HEK293T (cell line): ENCODE measurements at regions of chr15 and their contacts with region 1.

Region 1: DNA sequence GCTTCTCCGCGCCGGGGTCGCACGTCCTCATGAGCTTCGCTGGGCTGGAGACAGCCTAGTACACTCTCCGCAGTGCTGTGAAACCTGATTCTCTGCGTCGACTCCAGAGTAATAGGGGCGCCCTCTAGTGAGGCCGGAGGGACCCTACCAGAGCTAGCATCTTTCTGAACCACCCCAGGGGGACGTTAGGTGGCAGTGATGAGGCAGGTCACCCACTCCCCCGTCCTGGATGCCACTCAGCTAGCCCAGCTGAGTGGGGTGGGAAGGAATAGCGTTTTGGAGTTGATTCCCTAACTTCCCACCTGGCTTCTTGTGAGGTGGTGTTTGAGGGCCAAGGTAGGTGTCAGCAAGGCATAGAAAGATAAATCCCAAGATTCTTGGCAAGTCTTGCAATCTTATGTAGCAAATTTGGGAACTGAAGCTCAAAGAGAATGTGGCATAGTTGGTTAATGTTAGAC is 4.0 kb downstream of the DUOXA2 start:
- DNase-seq: peak; percentile 87

Region 2: GRCh38 chr15:44873103-44873502 is 245.1 kb before region 1 on chr15:
- CTCF ChIA-PET with region 1: no interaction called
- POLR2A ChIA-PET with region 1: no interaction called
- DNase-seq: no peak

Region 3: GRCh38 chr15:44968475-44968874 is 149.7 kb before region 1 on chr15:
- CTCF ChIA-PET with region 1: no interaction called
- POLR2A ChIA-PET with region 1: no interaction called
- DNase-seq: no peak

Region 4: DNA sequence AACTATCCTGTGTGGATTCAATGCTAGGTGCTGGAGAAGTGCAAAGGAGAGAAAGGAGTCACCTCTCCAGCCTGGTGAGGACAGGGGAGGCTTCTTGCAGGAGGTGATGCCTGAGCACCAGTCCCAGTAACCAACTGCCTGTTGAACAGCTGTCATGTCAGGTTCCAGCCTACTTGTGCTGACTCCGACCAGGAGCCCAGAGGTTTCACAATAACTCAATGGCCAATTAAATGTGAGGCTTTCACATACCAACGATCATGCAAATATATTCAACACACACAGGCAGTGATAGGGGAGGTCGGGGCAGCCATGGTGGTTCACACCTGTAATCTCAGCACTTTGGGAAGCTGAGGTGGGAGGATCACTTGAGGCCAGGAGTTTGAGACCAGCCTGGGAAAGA is 87.4 kb before region 1 on chr15:
- CTCF ChIA-PET with region 1: no interaction called
- POLR2A ChIA-PET with region 1: no interaction called
- DNase-seq: no peak

Region 5: GRCh38 chr15:45087513-45087912 is 30.6 kb before region 1 on chr15:
- CTCF ChIA-PET with region 1: interaction called, 11 read pairs
- POLR2A ChIA-PET with region 1: interaction called, 3 read pairs
- DNase-seq: no peak

Region 6: DNA sequence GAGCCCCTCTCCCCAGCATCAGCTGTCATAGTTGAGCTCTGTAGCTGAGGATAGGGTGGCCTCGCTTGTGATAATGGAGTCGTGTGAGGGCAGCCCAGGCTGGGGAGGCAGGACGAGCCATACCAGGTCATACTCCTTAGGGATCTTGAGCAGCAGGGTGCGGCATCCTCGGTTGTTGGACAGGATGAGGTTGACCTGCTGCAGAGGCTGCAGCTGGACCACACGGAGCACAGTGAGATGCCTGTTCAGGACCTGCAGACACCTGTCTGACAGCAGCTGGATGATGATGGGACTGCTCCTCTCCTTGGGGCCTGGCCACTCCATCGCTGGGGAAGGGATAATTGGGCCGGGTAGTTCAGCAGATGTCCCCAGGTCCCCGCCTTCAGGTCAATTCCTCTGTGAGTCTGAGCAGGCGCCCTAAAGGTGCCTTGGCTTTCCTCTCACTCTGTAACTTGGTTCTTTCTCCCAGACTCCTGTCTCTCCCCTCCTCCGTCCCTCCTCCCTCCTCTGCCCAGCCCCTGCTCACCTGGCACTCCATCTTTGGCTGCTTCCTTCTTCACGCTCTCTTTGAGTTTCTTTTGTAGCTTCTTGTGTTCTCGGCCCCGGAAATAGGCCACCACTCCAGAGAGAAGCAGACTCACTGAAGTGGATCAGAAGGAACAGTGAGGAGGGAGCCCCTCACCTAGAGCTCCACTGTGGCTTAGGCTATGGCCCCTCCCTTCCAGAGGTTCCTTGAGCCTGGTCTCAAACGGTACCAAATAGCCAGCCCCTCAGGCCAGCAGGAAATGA is 12.0 kb before region 1 on chr15:
- CTCF ChIA-PET with region 1: interaction called, 12 read pairs
- POLR2A ChIA-PET with region 1: no interaction called
- DNase-seq: no peak

Region 7: DNA sequence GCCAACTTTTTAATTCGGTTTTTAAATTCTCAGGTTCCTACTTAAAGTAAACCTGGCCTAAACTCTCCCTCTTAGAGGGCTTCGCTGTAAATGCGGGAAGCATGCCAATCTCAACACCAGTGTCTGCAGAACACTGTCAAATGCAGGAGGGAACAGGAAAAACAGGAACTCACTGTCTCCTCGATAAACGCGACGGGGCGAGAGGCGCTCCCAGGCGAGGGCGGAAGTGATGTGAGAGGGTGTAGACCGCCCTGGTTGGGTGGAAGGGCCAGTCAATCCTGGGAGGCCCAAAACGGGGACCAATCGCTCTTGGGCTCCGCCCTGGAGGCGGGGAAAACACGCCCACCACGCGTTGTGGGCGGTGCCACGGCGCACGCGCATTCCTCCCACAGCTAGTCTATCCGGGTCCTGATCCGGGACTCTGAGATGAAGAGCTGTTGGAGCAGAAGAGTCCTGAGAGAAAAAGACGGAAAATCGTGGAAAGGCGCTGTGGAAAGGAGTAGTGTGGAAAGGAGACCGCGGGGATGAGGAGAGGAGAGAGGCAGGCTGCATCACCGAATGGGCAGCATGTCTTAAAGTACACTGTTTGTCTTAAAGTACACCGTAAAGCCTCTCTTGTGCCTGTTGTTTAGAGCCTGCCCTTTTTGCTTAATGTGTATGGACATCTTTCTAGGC is 161.0 kb after region 1 on chr15:
- CTCF ChIA-PET with region 1: no interaction called
- POLR2A ChIA-PET with region 1: no interaction called
- DNase-seq: peak; percentile 93

Region 8: GRCh38 chr15:45481135-45481534 is 363.0 kb after region 1 on chr15:
- CTCF ChIA-PET with region 1: interaction called, 10 read pairs
- POLR2A ChIA-PET with region 1: no interaction called
- DNase-seq: no peak